Panc1 (cell line): ENCODE measurements at regions of chr19 and their contacts with region 1.

Region 1: DNA sequence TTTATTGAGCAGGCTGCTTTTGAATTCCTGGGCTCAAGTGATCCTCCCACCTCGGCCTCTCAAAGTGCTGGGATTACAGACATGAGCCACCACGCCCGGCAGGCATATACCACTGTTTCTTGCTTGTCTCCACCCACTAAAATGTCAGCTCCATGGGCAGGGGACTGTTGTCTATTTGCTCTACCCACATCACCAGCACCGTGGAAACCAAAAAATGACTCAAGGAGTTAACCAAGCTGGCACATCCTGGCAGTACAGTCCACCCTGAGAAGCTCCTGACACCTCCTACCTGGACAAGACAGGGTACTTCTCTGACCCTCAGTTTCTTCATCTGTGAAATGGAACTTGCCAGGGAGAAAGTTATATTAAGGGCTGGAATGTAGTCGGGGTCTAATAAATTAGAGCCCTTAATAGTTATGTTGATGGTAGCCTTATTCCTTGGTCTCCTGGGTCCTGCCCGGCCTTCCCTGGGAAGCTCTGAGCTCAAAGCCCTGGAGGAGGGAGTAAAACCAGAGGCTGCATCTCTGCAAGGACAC is 13.9 kb downstream of the RDH8 start:
- DNase-seq: no peak
- ATAC-seq: peak; percentile 29; the same call in 1 of the 2 replicates
- H3K4me3 ChIP-seq: peak overlapping the region; percentile 6 to 8; a peak in 1 of 4 replicates
- H3K27ac ChIP-seq: no peak overlapping the region
- H3K4me1 ChIP-seq: no peaks in the 10 kb centered on the region
- H3K27me3 ChIP-seq: no peaks in the 10 kb centered on the region
- CTCF ChIP-seq: no peak

Region 2: DNA sequence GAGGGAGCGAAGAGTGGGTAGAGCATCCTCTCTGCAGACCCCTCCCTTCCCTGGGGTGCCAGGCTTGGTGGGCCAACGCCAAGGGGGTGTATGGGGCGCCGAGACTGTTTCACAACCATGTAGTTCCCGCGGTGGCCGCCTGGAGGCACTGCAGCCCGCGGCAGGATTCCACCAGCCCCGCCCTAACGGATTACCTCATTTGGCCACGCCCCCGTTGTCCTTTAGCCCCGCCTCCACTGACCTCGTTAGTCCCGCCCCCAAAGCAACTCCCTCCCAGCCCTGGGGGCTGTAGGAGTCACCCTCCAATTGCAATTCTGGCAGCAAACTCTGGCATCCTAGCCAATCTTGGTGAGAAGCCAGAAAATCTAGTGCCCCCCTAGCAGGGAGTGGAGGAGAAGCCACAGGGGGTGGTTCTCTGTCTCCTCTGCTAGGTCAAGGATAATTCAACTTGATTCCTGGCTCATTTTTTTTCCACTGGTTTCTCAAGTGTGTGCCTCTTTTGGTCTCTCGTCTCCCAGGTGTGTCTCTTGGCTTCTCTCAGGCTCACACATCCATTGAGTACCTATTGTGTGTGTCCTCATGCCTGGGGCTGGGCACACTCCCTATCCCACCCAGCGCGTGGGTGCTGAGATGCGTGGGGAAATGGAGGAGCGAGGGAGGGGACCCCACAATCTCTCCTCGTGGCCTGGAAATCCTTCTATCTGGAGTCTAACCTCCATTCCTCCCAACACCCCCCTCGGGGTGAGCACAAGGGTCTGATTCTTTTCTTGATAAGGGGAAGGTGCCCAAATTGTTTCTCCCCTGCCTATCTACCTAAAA is 92.9 kb before region 1 on chr19:
- CTCF ChIA-PET with region 1: interaction called, 11 read pairs
- POLR2A ChIA-PET with region 1: interaction called, 6 read pairs
- in situ Hi-C with region 1: no loop called
- intact Hi-C with region 1: loop called (anchors 2 kb)
- DNase-seq: no peak
- ATAC-seq: peak; percentile 82
- H3K4me3 ChIP-seq: no peak overlapping the region
- H3K27ac ChIP-seq: no peak overlapping the region
- H3K4me1 ChIP-seq: no peaks in the 10 kb centered on the region
- H3K27me3 ChIP-seq: no peaks in the 10 kb centered on the region; the same call in 1 of the 2 replicates
- CTCF ChIP-seq: peak; percentile 93

Region 3: GRCh38 chr19:10000171-10000826 is 26.9 kb before region 1 on chr19:
- CTCF ChIA-PET with region 1: interaction called, 12 read pairs
- POLR2A ChIA-PET with region 1: no interaction called
- in situ Hi-C with region 1: no loop called
- intact Hi-C with region 1: no loop called
- DNase-seq: peak; percentile 36
- ATAC-seq: peak; percentile 69; the same call in 1 of the 2 replicates
- H3K4me3 ChIP-seq: no peak overlapping the region
- H3K27ac ChIP-seq: no peak overlapping the region
- H3K4me1 ChIP-seq: no peaks in the 10 kb centered on the region
- H3K27me3 ChIP-seq: no peaks in the 10 kb centered on the region
- CTCF ChIP-seq: peak; percentile 91